Heart right ventricle (tissue), 16 donors: ENCODE measurements at regions of chr10 and their contacts with region 1.

Region 1: GRCh38 chr10:75099952-75100763 is 11.3 kb upstream of the SAMD8 start:
- DNase-seq: peak; percentile 78 to 87
- ATAC-seq: peak; percentile 72 to 92 (median 86)
- H3K4me3 ChIP-seq: peak overlapping the region in 3 of 10 donors; percentile 3 to 27 (median 4)
- H3K27ac ChIP-seq: peak overlapping the region in 8 of 10 donors; percentile 6 to 88 (median 72)
- H3K4me1 ChIP-seq: peaks cover 4 to 28% (median 17%) of the 10 kb centered on the region in 9 donors
- H3K27me3 ChIP-seq: no peaks in the 10 kb centered on the region
- CTCF ChIP-seq: peak; percentile 97 to 100 (median 99)

Region 2: DNA sequence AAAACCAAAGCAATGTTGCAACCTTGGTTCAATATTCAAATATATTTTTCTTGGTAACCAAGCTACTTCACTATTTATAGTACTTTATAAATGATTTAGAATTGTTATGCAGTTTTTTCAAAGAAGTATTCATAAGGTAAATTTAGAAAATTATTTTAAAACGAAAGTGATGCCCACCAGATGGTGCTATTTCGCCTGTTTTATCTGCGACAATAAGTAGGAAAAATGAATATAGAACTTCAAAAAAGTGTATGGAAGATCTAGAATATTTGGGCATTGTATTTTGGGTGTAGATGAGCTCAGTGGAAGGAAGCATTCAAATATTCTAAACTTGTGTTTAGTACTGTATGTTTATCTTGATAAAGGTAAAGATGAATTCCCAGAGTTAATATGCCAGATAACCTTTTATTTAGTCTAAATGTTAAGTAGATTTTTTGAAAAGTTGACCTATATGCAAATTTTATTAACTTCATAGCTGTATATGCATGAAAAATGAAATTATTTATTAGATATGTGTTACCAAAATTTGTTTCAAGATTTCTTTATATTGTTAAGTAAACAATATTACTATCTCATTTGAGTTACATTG is 856.0 kb before region 1 on chr10:
- intact Hi-C with region 1: loop called in 5 of 10 experiments (anchors 1 to 5 kb)
- DNase-seq: peak in 1 of 2 donors; percentile 19
- ATAC-seq: no peak
- H3K4me3 ChIP-seq: no peak overlapping the region
- H3K27ac ChIP-seq: no peak overlapping the region
- H3K4me1 ChIP-seq: no peaks in the 10 kb centered on the region
- H3K27me3 ChIP-seq: no peaks in the 10 kb centered on the region
- CTCF ChIP-seq: peak; percentile 13 to 73 (median 57)

Region 3: GRCh38 chr10:74262856-74263255 is 837.3 kb before region 1 on chr10:
- intact Hi-C with region 1: loop called (anchors 1 to 5 kb)
- DNase-seq: no peak
- ATAC-seq: no peak
- H3K4me3 ChIP-seq: no peak overlapping the region
- H3K27ac ChIP-seq: no peak overlapping the region
- H3K4me1 ChIP-seq: peaks cover 0 to 5% (median 0%) of the 10 kb centered on the region in 9 donors
- H3K27me3 ChIP-seq: no peaks in the 10 kb centered on the region
- CTCF ChIP-seq: no peak

Region 4: DNA sequence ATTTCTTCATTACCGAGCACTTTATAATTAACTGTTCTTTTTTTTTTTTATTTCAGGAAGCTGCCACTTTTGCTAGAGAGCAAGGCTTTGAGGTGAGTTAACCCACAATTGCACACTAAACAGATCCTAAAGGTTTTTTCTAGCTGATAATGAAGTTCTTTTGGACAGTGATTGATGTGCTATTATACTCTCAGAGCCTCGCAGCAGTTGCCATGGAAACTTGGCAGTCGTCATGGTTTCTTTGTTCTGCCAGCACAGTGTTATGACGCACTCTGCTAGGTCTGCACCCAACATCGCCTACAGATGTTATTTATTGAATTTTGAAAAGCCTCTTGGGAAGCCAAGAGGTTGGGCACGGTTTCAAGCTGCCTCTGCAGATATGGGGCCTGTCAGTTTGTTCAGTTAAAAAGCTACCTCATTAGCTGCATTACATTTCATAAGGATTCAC is 510.9 kb before region 1 on chr10:
- intact Hi-C with region 1: loop called in 1 of 10 experiments (anchors 10 kb)
- DNase-seq: peak; percentile 79 to 94
- ATAC-seq: peak; percentile 89 to 97 (median 94)
- H3K4me3 ChIP-seq: no peak overlapping the region
- H3K27ac ChIP-seq: peak overlapping the region in 9 of 10 donors; percentile 13 to 72 (median 53)
- H3K4me1 ChIP-seq: peaks cover 9 to 91% (median 62%) of the 10 kb centered on the region in 9 donors
- H3K27me3 ChIP-seq: no peaks in the 10 kb centered on the region
- CTCF ChIP-seq: no peak

Region 5: DNA sequence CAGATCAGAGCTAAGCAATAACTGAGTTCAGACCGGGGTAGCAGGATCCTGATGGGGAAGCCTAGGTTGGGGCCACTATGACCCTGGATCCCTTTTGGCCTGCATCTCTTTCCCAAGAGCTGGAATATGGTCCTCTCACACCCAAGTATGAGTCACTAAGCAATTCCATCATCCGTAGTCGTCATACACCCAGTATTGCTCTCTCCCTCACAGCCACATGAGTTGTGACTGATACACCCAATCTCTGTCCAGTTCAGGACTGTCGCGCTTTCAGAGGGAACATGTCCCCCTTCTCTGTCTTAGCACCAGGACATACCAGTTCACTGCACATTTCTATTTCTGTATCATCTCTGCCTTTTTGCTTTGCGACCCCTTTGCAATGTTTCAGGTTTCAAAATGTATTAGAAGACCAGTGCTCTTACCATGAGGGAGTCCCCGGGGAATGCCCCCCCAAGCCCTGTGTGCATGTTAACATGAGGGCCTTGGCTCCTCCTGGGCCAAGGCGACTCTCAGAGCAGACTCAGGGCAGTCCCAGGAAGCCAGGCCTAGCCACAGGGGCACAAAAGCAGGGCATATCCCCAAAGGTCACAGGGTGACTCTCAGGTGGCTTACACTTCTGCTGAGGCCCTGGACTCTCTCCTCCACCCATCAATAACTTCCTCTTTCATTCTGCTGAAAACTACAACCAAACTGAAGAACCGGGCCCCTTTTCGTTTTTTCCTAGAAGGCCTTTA is 64.0 kb before region 1 on chr10:
- intact Hi-C with region 1: loop called in 3 of 10 experiments (anchors 5 to 10 kb)
- DNase-seq: no peak
- ATAC-seq: peak in 1 of 8 donors; percentile 15
- H3K4me3 ChIP-seq: no peak overlapping the region
- H3K27ac ChIP-seq: no peak overlapping the region
- H3K4me1 ChIP-seq: peaks cover 0 to 39% (median 17%) of the 10 kb centered on the region in 9 donors
- H3K27me3 ChIP-seq: no peaks in the 10 kb centered on the region
- CTCF ChIP-seq: no peak

Region 6: DNA sequence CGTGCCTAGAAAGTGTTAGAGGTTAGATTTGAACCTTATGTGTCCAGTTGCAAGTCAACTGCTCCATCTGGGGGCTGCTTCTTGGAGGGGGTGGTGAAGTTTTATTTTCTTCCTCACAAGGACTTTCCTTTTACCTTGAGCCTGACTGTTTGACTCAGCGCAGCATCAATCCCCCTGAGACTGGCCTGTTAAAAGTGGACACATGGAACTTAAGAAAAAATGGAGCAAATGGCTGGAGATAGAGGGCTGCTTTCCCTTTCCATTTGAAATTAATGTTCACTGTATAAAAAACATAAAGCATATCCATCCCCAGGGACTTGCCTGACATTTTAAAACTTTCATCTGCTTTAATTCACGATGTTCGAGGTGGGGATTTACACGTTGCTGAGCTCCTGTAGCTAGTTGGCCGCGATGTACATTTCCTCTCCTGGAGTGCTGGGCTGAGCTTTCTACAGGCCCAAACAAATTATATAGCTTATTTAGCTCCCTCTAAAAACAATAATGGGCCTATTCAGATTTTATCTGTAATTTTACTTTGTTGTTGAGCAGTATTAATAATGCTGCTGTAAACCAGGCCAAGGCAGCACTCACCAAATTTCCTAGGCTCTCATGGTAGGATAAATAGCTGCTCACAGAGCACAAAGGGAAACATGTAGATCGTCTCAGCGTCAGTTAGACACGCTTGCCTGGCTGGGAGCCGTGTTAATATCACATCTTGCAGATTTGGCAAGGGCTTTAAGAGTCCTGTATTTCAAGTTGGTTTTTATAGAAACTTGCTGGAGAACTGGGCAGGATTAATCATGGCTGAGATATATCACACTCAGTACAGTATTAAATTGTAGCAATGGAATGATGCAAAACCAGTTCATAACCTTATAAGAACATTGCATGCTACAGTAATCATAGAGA is 582.7 kb after region 1 on chr10:
- intact Hi-C with region 1: no loop called
- DNase-seq: no peak
- ATAC-seq: no peak
- H3K4me3 ChIP-seq: no peak overlapping the region
- H3K27ac ChIP-seq: no peak overlapping the region
- H3K4me1 ChIP-seq: peaks cover 0 to 10% (median 0%) of the 10 kb centered on the region in 9 donors
- H3K27me3 ChIP-seq: no peaks in the 10 kb centered on the region
- CTCF ChIP-seq: no peak